Gastrocnemius medialis (tissue), 4 donors: ENCODE measurements at regions of chr17 and their contacts with region 1.

Region 1: GRCh38 chr17:66673668-66674315 is 161.1 kb upstream of the CACNG5 start:
- DNase-seq: peak; percentile 16 to 24
- ATAC-seq: peak; percentile 25 to 47
- H3K4me3 ChIP-seq: no peak overlapping the region
- H3K27ac ChIP-seq: peak overlapping the region in 3 of 4 donors; percentile 9 to 22 (median 14)
- H3K4me1 ChIP-seq: peaks cover 13 to 25% of the 10 kb centered on the region in 2 donors
- H3K27me3 ChIP-seq: no peaks in the 10 kb centered on the region
- CTCF ChIP-seq: peak; percentile 64 to 75 (median 73)
- POLR2A ChIP-seq: no peak

Region 2: GRCh38 chr17:65556014-65556909 is 1117.5 kb before region 1 on chr17:
- in situ Hi-C with region 1: no loop called
- intact Hi-C with region 1: loop called (anchors 5 kb)
- DNase-seq: peak; percentile 62 to 81
- ATAC-seq: peak; percentile 29 to 46
- H3K4me3 ChIP-seq: peak overlapping the region in 1 of 4 donors; percentile 32
- H3K27ac ChIP-seq: no peak overlapping the region
- H3K4me1 ChIP-seq: peaks cover 14 to 31% of the 10 kb centered on the region in 2 donors
- H3K27me3 ChIP-seq: no peaks in the 10 kb centered on the region
- CTCF ChIP-seq: peak; percentile 73 to 95 (median 90)
- POLR2A ChIP-seq: peak; percentile 41 to 76

Region 3: GRCh38 chr17:66255112-66255511 is 418.7 kb before region 1 on chr17:
- in situ Hi-C with region 1: loop called (anchors 5 to 10 kb)
- intact Hi-C with region 1: loop called (anchors 1 kb)
- DNase-seq: peak in 1 of 2 donors; percentile 29
- ATAC-seq: peak; percentile 73 to 85
- H3K4me3 ChIP-seq: no peak overlapping the region
- H3K27ac ChIP-seq: no peak overlapping the region
- H3K4me1 ChIP-seq: no peaks in the 10 kb centered on the region
- H3K27me3 ChIP-seq: no peaks in the 10 kb centered on the region
- CTCF ChIP-seq: peak; percentile 26 to 70 (median 64)
- POLR2A ChIP-seq: no peak

Region 4: GRCh38 chr17:66508896-66509843 is 164.6 kb before region 1 on chr17:
- in situ Hi-C with region 1: no loop called
- intact Hi-C with region 1: loop called (anchors 2 kb)
- DNase-seq: peak in 1 of 2 donors; percentile 19
- ATAC-seq: peak; percentile 48 to 64
- H3K4me3 ChIP-seq: no peak overlapping the region
- H3K27ac ChIP-seq: peak overlapping the region in 3 of 4 donors; percentile 4 to 70 (median 49)
- H3K4me1 ChIP-seq: peaks cover 11% of the 10 kb centered on the region in 2 donors
- H3K27me3 ChIP-seq: no peaks in the 10 kb centered on the region
- CTCF ChIP-seq: no peak
- POLR2A ChIP-seq: no peak

Region 5: DNA sequence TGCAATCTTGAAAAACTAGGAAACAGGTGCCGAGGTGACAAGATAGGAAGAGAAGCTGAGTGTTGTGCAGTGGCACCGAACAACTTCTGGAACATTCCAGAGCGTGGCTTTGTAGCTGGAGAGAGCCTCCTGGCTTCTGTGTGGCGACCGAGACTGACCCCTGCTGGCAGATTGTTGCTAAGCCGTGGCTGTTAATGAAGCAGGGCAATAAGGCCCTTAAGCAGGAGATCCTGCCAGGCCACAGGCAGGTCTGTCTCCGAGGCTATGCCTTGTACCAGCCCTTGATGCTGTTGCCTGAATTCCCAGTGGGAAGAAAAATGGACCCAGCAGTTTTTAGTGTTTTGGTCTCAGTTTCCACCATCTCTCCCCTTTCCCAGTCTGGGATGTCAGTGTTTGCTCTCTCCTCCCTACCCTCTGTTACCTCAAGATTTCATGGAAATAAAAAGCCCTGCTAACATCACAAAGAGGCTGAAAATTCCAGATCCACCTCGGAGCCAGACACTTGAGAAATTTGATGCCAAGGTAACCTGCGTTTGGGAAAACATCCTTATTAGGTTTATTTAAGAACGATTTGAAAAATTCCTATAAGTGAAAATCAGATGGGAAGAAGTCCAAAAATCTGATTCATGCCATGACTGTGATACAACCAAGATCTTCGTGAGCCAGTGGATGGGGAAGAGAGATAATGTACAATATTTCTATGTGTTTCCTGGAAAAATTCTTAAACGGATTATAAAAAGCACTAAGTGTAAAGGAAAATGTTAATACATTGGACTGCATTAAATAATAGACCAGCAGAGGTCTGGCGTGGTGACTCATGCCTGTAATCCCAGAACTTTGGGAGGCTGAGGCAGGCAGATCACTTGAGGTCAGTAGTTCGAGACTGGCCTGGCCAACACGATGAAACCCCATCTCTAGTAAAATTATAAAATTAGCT is 106.3 kb before region 1 on chr17:
- in situ Hi-C with region 1: no loop called
- intact Hi-C with region 1: loop called (anchors 5 kb)
- DNase-seq: peak; percentile 32 to 62
- ATAC-seq: peak; percentile 81 to 85
- H3K4me3 ChIP-seq: no peak overlapping the region
- H3K27ac ChIP-seq: no peak overlapping the region
- H3K4me1 ChIP-seq: no peaks in the 10 kb centered on the region
- H3K27me3 ChIP-seq: no peaks in the 10 kb centered on the region
- CTCF ChIP-seq: peak; percentile 43 to 82 (median 78)
- POLR2A ChIP-seq: no peak

Region 6: DNA sequence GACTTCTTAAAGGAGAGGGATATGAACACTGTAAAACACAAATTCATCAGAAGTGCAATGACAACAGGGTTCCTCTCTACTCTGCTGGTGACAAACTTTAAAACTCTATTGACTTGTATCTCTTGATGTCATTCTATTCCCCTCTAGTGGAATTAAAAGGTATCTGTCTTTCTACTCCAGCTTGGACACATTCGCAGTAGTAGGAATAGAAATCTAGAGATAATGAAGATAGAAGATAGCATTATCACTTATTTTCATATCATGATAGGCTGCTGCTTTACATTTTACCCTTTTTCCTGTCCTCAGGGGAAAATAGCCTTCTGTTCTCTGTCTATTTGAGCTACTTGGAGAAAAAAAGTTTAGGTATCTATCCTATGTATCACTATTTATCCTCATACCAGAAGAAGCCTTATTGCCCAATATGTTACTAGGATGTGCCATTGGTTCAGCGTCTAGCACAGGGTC is 48.4 kb before region 1 on chr17:
- in situ Hi-C with region 1: no loop called
- intact Hi-C with region 1: loop called (anchors 5 kb)
- DNase-seq: no peak
- ATAC-seq: no peak
- H3K4me3 ChIP-seq: no peak overlapping the region
- H3K27ac ChIP-seq: no peak overlapping the region
- H3K4me1 ChIP-seq: peaks cover 3 to 11% of the 10 kb centered on the region in 2 donors
- H3K27me3 ChIP-seq: no peaks in the 10 kb centered on the region
- CTCF ChIP-seq: peak in 3 of 5 experiments; percentile 13 to 43 (median 16)
- POLR2A ChIP-seq: no peak

Region 7: DNA sequence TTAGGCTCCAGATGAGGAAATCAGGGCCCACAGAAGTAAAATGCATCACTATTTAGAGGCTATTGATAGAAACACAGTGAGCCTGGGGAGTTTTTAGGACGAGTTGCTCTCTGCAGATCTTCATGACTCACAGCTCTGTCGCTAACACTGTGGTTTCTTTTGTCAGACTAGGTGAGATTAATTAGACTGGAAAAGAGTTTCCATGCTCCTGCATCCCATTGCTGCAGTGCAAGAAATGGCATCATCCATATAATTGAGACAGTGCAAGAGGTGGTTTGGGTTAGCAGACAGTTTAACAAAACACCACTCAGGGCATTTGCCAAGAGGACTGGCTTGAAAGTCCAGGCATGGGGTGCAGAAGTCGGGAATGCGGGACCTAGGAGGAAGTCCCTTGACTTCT is 37.7 kb before region 1 on chr17:
- in situ Hi-C with region 1: no loop called
- intact Hi-C with region 1: no loop called
- DNase-seq: no peak
- ATAC-seq: no peak
- H3K4me3 ChIP-seq: no peak overlapping the region
- H3K27ac ChIP-seq: no peak overlapping the region
- H3K4me1 ChIP-seq: peaks cover 2 to 4% of the 10 kb centered on the region in 2 donors
- H3K27me3 ChIP-seq: no peaks in the 10 kb centered on the region
- CTCF ChIP-seq: no peak
- POLR2A ChIP-seq: no peak

Region 8: DNA sequence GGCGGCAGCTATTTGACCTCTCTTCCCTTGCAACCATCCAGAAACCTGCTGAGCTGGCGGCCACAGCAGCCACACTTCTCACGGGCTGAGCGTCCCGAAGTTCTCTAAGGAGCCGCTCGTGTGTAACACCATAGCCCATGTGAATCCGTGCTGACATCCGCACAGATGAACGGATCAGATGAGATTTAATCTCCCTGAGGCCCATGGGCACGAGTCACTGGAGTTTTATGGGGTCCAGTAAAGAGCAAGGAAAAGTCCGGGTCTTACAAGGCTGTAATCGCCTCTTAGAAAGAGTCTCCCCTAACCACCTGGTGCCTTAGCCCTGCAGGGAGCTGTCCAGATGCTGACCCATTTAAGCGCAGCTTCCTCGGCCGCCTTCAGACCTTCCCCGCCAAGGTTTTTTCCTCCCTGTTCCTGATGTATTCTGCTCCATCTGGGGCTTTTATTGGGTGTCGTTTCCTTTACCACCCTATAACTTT is 155.6 kb after region 1 on chr17:
- in situ Hi-C with region 1: no loop called
- intact Hi-C with region 1: no loop called
- DNase-seq: no peak
- ATAC-seq: peak; percentile 42 to 53
- H3K4me3 ChIP-seq: no peak overlapping the region
- H3K27ac ChIP-seq: no peak overlapping the region
- H3K4me1 ChIP-seq: no peaks in the 10 kb centered on the region
- H3K27me3 ChIP-seq: peaks cover 7 to 17% (median 8%) of the 10 kb centered on the region in 3 donors
- CTCF ChIP-seq: no peak
- POLR2A ChIP-seq: no peak